ENCODE measurements at regions of chr6 and their contacts with region 1.

Region 1: GRCh38 chr6:158972241-158973233 is 27.5 kb downstream of the RSPH3 start:
- DNase-seq: peak; percentile 21 to 58
- ATAC-seq: peak; percentile 59 to 71; a peak in 5 of 6 replicates
- H3K4me3 ChIP-seq: no peak overlapping the region
- H3K27ac ChIP-seq: peak overlapping the region; percentile 15 to 37; a peak in 2 of 6 replicates
- H3K4me1 ChIP-seq: peaks cover 6% of the 10 kb centered on the region; the same call in 2 of the 3 replicates
- CTCF ChIP-seq: peak; percentile 66
- EP300 ChIP-seq: no peak
- POLR2A ChIP-seq: no peak
- RAD21 ChIP-seq: peak; percentile 86 to 89

Region 2: GRCh38 chr6:158704181-158704822 is 268.2 kb before region 1 on chr6:
- CTCF ChIA-PET with region 1: interaction called, 74 read pairs
- POLR2A ChIA-PET with region 1: no interaction called
- DNase-seq: peak; percentile 65 to 75
- ATAC-seq: peak; percentile 86 to 95
- H3K4me3 ChIP-seq: peak overlapping the region; percentile 43
- H3K27ac ChIP-seq: peak overlapping the region; percentile 86 to 89
- H3K4me1 ChIP-seq: peaks cover 36% of the 10 kb centered on the region
- CTCF ChIP-seq: peak; percentile 83
- EP300 ChIP-seq: no peak
- POLR2A ChIP-seq: no peak
- RAD21 ChIP-seq: peak; percentile 83 to 94

Region 3: GRCh38 chr6:158711264-158711663 is 261.3 kb before region 1 on chr6:
- CTCF ChIA-PET with region 1: interaction called, 18 read pairs
- POLR2A ChIA-PET with region 1: no interaction called
- DNase-seq: no peak
- ATAC-seq: no peak
- H3K4me3 ChIP-seq: no peak overlapping the region
- H3K27ac ChIP-seq: peak overlapping the region in 1 of 2 experiments; percentile 23; a peak in 1 of 6 replicates
- H3K4me1 ChIP-seq: peaks cover 17% of the 10 kb centered on the region
- CTCF ChIP-seq: no peak
- EP300 ChIP-seq: no peak
- POLR2A ChIP-seq: no peak
- RAD21 ChIP-seq: no peak

Region 4: DNA sequence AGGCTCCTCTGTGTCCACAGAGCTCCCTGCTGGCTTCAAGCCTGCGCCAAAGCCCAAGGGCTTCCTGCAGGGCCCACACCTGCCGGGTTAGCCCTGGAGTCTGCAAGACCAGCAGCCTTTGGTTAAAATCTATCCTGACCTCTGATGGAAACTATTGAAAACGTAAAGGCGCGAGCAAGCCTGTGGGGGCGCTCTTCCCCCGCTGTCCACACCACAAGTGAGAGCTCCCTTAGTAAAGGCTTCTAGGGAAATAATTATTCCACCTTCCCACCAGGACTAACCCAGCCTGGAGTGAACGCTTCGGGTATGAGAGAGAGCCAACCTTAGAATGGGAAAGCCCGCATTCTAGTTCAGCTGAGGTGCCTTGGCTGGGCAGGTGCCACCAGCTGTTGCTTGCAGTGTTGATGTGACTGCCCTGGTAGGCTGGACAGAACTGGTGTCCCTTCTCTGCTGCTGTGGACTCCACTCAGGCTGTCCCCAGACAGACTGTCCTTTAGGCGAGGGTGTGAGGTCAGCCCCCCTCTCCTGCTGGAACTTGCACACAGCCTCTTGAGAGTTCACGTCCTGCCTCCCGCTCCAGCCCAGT is 254.0 kb before region 1 on chr6:
- CTCF ChIA-PET with region 1: interaction called, 12 read pairs
- POLR2A ChIA-PET with region 1: no interaction called
- DNase-seq: peak; percentile 40 to 54
- ATAC-seq: peak; percentile 71 to 85
- H3K4me3 ChIP-seq: no peak overlapping the region
- H3K27ac ChIP-seq: peak overlapping the region; percentile 64 to 67; a peak in 3 of 6 replicates
- H3K4me1 ChIP-seq: peaks cover 17% of the 10 kb centered on the region
- CTCF ChIP-seq: peak; percentile 45
- EP300 ChIP-seq: no peak
- POLR2A ChIP-seq: no peak
- RAD21 ChIP-seq: peak; percentile 59 to 72

Region 5: DNA sequence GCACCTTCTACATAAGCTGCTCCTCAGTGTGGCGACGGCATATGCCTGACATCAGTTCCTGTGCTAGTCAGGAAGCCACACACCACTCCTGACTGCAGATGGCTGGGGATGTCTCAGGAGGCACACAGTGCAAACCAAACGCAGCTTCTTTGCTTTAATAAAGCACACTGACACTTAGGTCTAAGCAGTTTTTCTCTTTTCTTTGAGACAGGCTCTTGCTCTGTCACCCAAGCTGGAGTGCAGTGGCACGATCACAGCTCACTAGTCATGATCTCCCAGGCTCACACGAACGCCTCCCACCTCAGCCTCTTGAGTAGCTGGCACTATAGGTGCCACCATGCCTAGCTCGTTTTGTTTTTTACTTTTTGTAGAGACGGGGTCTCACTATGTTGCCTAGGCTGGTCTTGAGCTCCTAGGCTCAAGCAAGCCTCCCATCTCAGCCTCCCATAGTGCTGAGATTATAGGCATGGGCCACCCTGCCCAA is 183.1 kb before region 1 on chr6:
- CTCF ChIA-PET with region 1: interaction called, 16 read pairs
- POLR2A ChIA-PET with region 1: no interaction called
- DNase-seq: no peak
- ATAC-seq: no peak; a peak in 1 of 6 replicates
- H3K4me3 ChIP-seq: no peak overlapping the region
- H3K27ac ChIP-seq: no peak overlapping the region
- H3K4me1 ChIP-seq: peaks cover 61% of the 10 kb centered on the region
- CTCF ChIP-seq: no peak
- EP300 ChIP-seq: no peak
- POLR2A ChIP-seq: no peak
- RAD21 ChIP-seq: no peak

Region 6: DNA sequence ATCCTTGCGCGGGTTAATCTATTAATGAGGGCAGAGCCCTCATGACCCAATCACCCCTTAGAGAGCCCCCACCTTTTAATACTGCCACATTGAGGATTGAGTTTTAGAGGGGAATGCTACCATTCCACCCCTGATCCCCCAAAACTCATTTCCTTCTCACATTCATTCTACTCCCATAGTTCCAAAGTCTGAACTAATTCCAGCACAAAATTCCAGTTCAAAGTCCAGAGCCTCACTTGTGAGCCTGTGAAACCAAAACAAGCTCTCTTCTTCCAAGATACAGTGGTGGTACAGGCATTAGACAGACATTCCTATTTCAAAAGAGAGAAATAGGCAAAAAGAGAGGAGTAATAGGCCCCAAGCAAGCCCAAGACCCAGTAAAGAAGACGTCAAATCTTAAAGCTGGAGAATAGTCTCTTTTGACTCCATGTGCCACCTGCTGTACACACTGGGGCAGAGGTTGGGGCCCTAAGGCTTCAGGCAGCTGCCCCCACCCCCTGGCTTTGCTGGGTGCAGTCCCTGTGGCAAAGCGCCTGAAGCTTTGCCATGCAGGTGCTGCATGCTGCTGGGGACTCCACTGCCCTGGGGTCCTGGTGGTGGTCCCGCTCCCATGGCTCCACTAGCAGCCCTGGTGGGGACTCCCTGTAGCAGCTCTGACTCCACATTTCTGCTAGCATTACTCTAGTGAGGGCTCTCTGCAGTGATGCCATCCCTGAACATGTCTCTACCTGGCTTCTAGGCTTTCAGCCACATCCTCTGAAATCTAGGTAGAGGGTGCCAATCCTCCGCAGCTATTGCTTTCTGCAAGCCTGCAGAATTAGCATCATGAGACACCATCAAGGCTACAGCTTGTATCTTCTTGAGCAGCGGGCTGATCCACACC is 13.8 kb before region 1 on chr6:
- CTCF ChIA-PET with region 1: interaction called, 14 read pairs
- POLR2A ChIA-PET with region 1: no interaction called
- DNase-seq: no peak
- ATAC-seq: peak; percentile 47 to 54; a peak in 4 of 6 replicates
- H3K4me3 ChIP-seq: no peak overlapping the region
- H3K27ac ChIP-seq: no peak overlapping the region
- H3K4me1 ChIP-seq: 0 out of 3 replicates have a peak, but pooled peaks cover 8% of the 10 kb centered on the region
- CTCF ChIP-seq: no peak
- EP300 ChIP-seq: no peak
- POLR2A ChIP-seq: no peak
- RAD21 ChIP-seq: 0 out of 5 replicates have a peak, but pooled peaks have one; percentile 12 to 16

Region 7: GRCh38 chr6:159098636-159099106 is 126.1 kb after region 1 on chr6:
- CTCF ChIA-PET with region 1: no interaction called
- POLR2A ChIA-PET with region 1: no interaction called
- DNase-seq: no peak
- ATAC-seq: no peak
- H3K4me3 ChIP-seq: no peak overlapping the region
- H3K27ac ChIP-seq: no peak overlapping the region
- H3K4me1 ChIP-seq: no peaks in the 10 kb centered on the region
- CTCF ChIP-seq: no peak
- EP300 ChIP-seq: no peak
- POLR2A ChIP-seq: no peak
- RAD21 ChIP-seq: no peak